ENCODE measurements at regions of chr2 and their contacts with region 1.

Region 1: GRCh38 chr2:210412660-210413059 is 63.9 kb downstream of the LANCL1 start:
- DNase-seq: no peak
- H3K4me3 ChIP-seq: no peak overlapping the region
- H3K27ac ChIP-seq: no peak overlapping the region
- H3K4me1 ChIP-seq: no peaks in the 10 kb centered on the region
- H3K27me3 ChIP-seq: peaks cover 7% of the 10 kb centered on the region
- CTCF ChIP-seq: no peak

Region 2: DNA sequence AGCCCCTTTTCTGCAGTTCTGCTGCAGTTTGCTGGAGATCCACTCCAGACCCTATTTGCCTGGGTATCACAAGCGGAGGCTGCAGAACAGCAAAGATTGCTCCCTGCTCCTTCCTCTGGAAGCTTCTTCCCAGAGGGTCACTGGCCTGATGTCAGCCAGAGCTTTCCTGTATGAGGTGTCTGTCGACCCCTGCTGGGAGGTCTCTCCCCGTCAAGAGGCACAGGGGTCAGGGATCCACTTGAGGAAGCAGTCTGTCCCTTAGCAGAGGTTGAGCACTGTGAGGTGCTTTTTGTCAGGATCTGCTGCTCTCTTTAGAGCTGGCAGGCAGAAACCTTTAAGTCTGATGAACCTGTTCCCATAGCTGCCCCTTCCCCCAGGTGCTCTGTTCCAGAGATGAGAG is 55.7 kb before region 1 on chr2:
- CTCF ChIA-PET with region 1: interaction called, 17 read pairs
- dilution Hi-C with region 1: no loop called
- in situ Hi-C with region 1: no loop called
- intact Hi-C with region 1: no loop called
- DNase-seq: no peak
- H3K4me3 ChIP-seq: no peak overlapping the region
- H3K27ac ChIP-seq: no peak overlapping the region
- H3K4me1 ChIP-seq: no peaks in the 10 kb centered on the region
- H3K27me3 ChIP-seq: no peaks in the 10 kb centered on the region
- CTCF ChIP-seq: no peak

Region 3: DNA sequence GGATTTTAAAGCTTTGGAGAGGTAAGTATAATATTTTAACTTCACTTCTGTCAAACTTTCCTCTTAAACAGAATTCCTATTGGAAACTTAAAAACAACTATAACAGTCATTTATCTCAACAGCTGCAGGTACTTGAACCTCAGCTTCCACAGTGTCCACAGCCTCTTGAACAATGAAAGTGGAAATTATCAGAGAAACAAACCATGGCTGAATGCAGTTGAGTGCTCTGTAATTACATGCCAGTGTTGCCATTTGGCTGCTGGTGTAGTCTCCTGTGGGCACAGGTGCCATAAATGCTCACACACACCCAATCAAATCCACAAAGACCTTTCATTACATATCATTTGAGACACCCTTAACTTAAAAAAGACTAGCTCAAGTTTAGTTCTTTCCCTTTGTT is 268.8 kb after region 1 on chr2:
- CTCF ChIA-PET with region 1: no interaction called
- dilution Hi-C with region 1: no loop called
- in situ Hi-C with region 1: no loop called
- intact Hi-C with region 1: no loop called
- DNase-seq: no peak
- H3K4me3 ChIP-seq: no peak overlapping the region
- H3K27ac ChIP-seq: no peak overlapping the region
- H3K4me1 ChIP-seq: no peaks in the 10 kb centered on the region
- H3K27me3 ChIP-seq: no peaks in the 10 kb centered on the region
- CTCF ChIP-seq: no peak

Measured in mammary epithelial cell (primary cell).